ENCODE measurements at regions of chr2 and their contacts with region 1.

Region 1: GRCh38 chr2:176096986-176097819 is 2.4 kb upstream of the HOXD12 start:
- DNase-seq: peak; percentile 81 to 84
- ATAC-seq: peak; percentile 91 to 97
- H3K4me3 ChIP-seq: peak overlapping the region; percentile 55
- H3K27ac ChIP-seq: peak overlapping the region; percentile 73 to 90
- H3K4me1 ChIP-seq: peaks cover 7% of the 10 kb centered on the region; the same call in 2 of the 3 replicates
- CTCF ChIP-seq: peak; percentile 88
- EP300 ChIP-seq: no peak
- POLR2A ChIP-seq: no peak
- RAD21 ChIP-seq: peak; percentile 86 to 94

Region 2: GRCh38 chr2:175203621-175204496 is 893.3 kb before region 1 on chr2:
- CTCF ChIA-PET with region 1: interaction called, 14 read pairs
- POLR2A ChIA-PET with region 1: no interaction called
- DNase-seq: peak; percentile 21 to 67
- ATAC-seq: peak; percentile 99 to 100
- H3K4me3 ChIP-seq: no peak overlapping the region
- H3K27ac ChIP-seq: no peak overlapping the region
- H3K4me1 ChIP-seq: no peaks in the 10 kb centered on the region
- CTCF ChIP-seq: peak; percentile 58
- EP300 ChIP-seq: no peak
- POLR2A ChIP-seq: no peak
- RAD21 ChIP-seq: peak; percentile 68 to 71

Region 3: GRCh38 chr2:175251425-175252041 is 845.7 kb before region 1 on chr2:
- CTCF ChIA-PET with region 1: interaction called, 14 read pairs
- POLR2A ChIA-PET with region 1: no interaction called
- DNase-seq: peak; percentile 20 to 46
- ATAC-seq: peak; percentile 50 to 74; a peak in 3 of 6 replicates
- H3K4me3 ChIP-seq: no peak overlapping the region
- H3K27ac ChIP-seq: no peak overlapping the region
- H3K4me1 ChIP-seq: no peaks in the 10 kb centered on the region
- CTCF ChIP-seq: peak; percentile 81
- EP300 ChIP-seq: no peak
- POLR2A ChIP-seq: no peak
- RAD21 ChIP-seq: peak; percentile 51 to 54; a peak in 4 of 5 replicates

Region 4: GRCh38 chr2:175366815-175367214 is 730.4 kb before region 1 on chr2:
- CTCF ChIA-PET with region 1: interaction called, 13 read pairs
- POLR2A ChIA-PET with region 1: no interaction called
- DNase-seq: peak; percentile 35 to 47
- ATAC-seq: peak; percentile 92 to 98
- H3K4me3 ChIP-seq: no peak overlapping the region
- H3K27ac ChIP-seq: no peak overlapping the region
- H3K4me1 ChIP-seq: no peaks in the 10 kb centered on the region
- CTCF ChIP-seq: peak; percentile 75
- EP300 ChIP-seq: no peak
- POLR2A ChIP-seq: no peak
- RAD21 ChIP-seq: peak; percentile 74 to 81

Region 5: GRCh38 chr2:175690113-175690837 is 406.9 kb before region 1 on chr2:
- CTCF ChIA-PET with region 1: interaction called, 48 read pairs
- POLR2A ChIA-PET with region 1: no interaction called
- DNase-seq: peak in 1 of 2 experiments; percentile 67
- ATAC-seq: peak; percentile 82 to 90; a peak in 5 of 6 replicates
- H3K4me3 ChIP-seq: no peak overlapping the region
- H3K27ac ChIP-seq: no peak overlapping the region
- H3K4me1 ChIP-seq: no peaks in the 10 kb centered on the region
- CTCF ChIP-seq: peak; percentile 73
- EP300 ChIP-seq: no peak
- POLR2A ChIP-seq: no peak
- RAD21 ChIP-seq: peak; percentile 71 to 74

Region 6: DNA sequence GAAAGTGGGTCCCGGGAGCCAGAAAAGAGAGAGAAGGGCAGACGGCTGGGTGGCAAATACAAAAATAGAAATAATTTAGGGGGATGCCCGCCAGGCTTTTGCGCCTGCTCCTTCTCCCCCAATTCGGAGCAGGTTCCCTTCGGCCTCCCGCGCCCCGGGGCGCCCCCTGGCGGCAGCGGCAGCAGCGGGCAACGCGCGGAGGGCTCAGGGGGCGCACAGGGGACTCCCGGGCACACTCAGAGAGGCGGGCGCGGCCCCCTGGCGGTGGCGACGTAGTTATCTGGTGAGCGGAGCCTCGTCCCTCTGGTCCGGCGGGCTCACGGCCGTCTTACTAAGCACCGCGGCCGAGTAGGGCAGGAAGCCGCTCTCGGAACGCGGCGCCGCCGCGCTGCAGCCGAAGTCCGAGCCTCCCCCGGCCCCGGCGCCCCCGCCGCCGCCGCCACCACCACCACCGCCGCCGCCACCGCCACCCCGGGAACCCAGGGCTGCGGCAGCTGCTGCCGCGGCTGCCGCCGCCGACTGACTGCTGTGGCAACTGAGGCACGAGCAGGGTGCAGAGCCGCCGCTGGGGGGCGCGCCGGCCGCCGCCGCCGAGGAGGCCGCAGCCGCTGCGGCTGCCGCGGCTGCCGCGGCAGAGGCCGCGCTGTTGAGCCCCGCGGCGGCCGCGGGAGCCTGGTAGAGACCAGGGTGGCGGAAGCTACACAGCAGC is 17.2 kb before region 1 on chr2:
- CTCF ChIA-PET with region 1: interaction called, 57 read pairs
- POLR2A ChIA-PET with region 1: interaction called, 3 read pairs
- DNase-seq: peak; percentile 82 to 85
- ATAC-seq: peak; percentile 91 to 97
- H3K4me3 ChIP-seq: peak overlapping the region; percentile 49
- H3K27ac ChIP-seq: peak overlapping the region; percentile 64 to 80; a peak in 5 of 6 replicates
- H3K4me1 ChIP-seq: peaks cover 9% of the 10 kb centered on the region; the same call in 2 of the 3 replicates
- CTCF ChIP-seq: peak; percentile 93
- EP300 ChIP-seq: no peak
- POLR2A ChIP-seq: no peak
- RAD21 ChIP-seq: peak; percentile 40 to 67; a peak in 4 of 5 replicates

Region 7: DNA sequence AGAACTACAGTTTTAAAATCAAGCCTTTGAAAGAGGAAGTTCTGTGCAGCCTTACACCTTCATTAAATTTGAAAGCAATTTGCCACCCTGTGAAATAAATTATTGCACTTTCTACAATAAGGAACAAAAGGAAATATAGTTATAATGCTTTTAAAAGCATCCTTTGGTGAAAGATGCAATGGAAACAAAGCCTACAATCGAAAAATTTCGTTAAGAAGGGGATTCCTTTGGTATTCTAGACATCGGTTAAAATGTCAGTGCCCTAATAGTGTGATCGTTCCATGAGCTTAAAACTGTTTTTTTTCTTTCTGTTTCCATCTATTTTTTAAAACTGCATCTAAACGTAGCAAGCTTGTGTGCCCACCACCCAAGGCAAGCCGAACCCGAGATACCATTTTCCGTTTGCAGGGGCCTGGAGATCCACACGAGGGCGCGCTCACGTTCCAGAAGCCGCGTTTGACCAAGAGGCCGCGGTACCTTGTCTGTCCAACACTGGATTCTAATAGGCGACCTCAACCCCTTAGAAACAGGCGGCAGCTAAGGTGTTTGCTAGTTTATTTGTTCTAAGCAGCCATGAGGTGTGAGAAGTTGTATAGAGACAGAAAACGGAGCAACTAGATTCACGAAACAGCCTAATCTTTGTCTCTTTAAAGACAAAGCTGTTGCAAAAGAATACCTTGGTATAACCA is 13.9 kb after region 1 on chr2:
- CTCF ChIA-PET with region 1: interaction called, 18 read pairs
- POLR2A ChIA-PET with region 1: no interaction called
- DNase-seq: peak; percentile 68 to 76
- ATAC-seq: peak; percentile 12 to 67; a peak in 4 of 6 replicates
- H3K4me3 ChIP-seq: no peak overlapping the region
- H3K27ac ChIP-seq: no peak overlapping the region
- H3K4me1 ChIP-seq: peaks cover 9% of the 10 kb centered on the region
- CTCF ChIP-seq: peak; percentile 82
- EP300 ChIP-seq: no peak
- POLR2A ChIP-seq: no peak
- RAD21 ChIP-seq: peak; percentile 37; a peak in 3 of 5 replicates

Region 8: GRCh38 chr2:176317199-176317598 is 220.0 kb after region 1 on chr2:
- CTCF ChIA-PET with region 1: no interaction called
- POLR2A ChIA-PET with region 1: no interaction called
- DNase-seq: no peak
- ATAC-seq: no peak; a peak in 1 of 6 replicates
- H3K4me3 ChIP-seq: no peak overlapping the region
- H3K27ac ChIP-seq: peak overlapping the region in 1 of 2 experiments; percentile 47; a peak in 1 of 6 replicates
- H3K4me1 ChIP-seq: peaks cover 22% of the 10 kb centered on the region
- CTCF ChIP-seq: no peak
- EP300 ChIP-seq: no peak
- POLR2A ChIP-seq: no peak
- RAD21 ChIP-seq: no peak

Region 9: DNA sequence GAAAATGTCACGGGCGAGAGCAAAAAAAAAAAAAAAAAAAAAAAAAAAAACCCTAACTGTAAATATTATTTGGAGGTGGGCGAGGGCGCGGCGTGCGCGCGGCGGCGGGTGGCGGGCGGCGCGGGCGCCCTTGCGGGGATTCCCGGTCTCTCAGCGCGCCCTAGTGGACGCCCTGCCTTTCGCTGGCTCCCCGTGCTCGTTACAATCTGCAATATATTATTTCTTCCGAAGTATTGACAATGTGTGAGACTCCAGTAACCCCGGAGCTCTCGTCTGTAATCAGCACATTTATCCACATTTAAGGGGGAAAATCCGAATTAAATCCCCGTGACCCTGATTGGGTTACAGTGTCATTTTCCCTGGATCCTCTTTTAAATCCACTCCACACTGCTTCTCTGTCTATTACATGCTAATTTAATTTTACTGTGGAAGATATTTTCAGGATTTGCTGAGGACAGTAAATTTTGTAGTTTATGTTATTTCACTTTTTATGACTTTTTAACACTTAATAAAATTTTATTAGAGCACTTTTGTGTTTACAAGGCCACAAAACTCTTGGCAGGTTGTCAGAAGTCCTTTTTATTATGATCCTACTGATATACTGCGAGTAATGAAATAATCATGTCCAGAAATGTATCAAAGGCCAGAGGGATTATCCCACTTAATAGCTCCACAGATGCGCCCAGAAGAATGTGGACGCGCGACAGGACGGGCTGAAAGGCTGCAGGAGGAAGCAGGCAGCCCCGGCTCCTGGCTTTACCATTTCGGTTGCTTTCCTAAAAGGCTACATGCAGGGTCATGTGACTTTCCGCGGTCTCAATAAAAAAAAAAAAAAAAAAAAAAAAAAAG is 541.2 kb after region 1 on chr2:
- CTCF ChIA-PET with region 1: no interaction called
- POLR2A ChIA-PET with region 1: no interaction called
- DNase-seq: peak; percentile 68 to 69
- ATAC-seq: peak; percentile 92 to 96
- H3K4me3 ChIP-seq: peak overlapping the region; percentile 66
- H3K27ac ChIP-seq: peak overlapping the region; percentile 88 to 95
- H3K4me1 ChIP-seq: peaks cover 11% of the 10 kb centered on the region; the same call in 2 of the 3 replicates
- CTCF ChIP-seq: peak; percentile 96
- EP300 ChIP-seq: no peak
- POLR2A ChIP-seq: no peak
- RAD21 ChIP-seq: peak; percentile 87 to 98

Measured in A549 (cell line).